RWPE1 (cell line): ENCODE measurements at regions of chr5 and their contacts with region 1.

Region 1: GRCh38 chr5:45741110-45741509 is 44.9 kb upstream of the HCN1 start:
- DNase-seq: no peak
- H3K27ac ChIP-seq: no peak overlapping the region
- CTCF ChIP-seq: no peak

Region 2: GRCh38 chr5:45725537-45725936 is 15.6 kb before region 1 on chr5:
- CTCF ChIA-PET with region 1: no interaction called
- POLR2A ChIA-PET with region 1: no interaction called
- DNase-seq: no peak
- H3K27ac ChIP-seq: no peak overlapping the region
- CTCF ChIP-seq: no peak

Region 3: DNA sequence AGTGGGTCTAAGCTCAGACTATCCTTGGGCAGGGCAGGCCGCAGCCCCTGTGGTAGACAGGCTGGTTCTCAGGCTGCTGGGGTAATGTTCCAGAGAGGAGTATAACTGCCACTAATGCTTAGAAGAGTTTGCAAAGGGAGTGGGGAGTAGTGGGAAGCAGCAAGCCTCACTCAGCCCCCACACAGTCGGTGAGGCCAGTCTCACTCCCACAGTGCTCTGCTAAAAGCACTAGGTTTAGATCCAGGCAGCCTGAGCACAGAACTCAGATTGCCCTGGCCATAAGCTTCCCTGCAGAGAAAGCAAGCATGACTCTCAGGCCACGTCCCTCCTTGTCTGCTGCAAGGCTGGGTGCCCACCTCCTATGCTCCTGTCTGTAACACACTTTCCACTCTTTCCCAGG is 24.5 kb after region 1 on chr5:
- CTCF ChIA-PET with region 1: interaction called, 10 read pairs
- POLR2A ChIA-PET with region 1: no interaction called
- DNase-seq: no peak
- H3K27ac ChIP-seq: no peak overlapping the region
- CTCF ChIP-seq: no peak